ENCODE measurements at regions of chr16 and their contacts with region 1.

Region 1: DNA sequence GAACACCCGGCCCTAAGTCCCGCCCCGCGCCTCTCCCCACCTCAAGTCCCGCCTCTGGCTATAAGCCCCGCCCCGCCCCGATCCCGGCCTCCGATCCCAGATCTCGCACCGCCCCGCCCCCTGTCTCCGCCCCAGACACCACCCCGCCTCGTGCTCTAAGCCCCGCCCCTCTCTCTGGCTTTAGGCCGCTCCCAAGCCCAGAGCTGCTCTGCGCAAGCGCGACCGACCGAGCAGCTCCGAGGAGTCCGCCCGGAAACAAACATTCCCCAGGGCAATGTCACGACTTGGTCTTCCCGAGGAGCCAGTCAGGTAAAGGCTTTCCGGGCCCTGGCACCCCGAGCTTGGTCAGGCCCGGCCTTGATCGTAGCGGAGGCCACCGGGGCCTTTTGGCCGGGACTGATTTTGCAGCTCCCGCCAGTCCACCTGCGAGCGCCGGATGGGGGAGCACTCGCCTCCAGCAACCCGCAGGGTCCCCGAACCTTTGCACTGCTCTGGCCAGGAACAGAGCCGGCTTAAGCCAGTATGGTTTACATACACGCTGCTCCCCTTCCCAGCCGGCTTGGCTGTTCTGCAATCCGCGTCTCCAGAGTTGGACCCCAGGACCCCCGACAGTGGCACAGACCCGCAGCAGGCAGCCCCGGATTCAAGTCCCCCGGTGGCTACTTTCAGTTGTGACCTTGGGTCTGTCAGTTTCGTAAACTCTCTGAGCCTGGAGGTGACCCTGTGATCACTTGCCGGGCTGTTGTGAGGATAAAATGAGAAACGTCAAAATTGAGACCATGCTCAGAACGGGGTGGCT is at the start of gene NUDT7:
- DNase-seq: peak; percentile 87 to 91 (median 89)
- H3K4me3 ChIP-seq: peak within 1 kb of the TSS; percentile 55 to 77
- H3K4me3 Mint-ChIP-seq: peak within 1 kb of the TSS; percentile 86 to 94 (median 90)
- H3K27ac ChIP-seq: peak within 1 kb of the TSS; percentile 54
- H3K27ac Mint-ChIP-seq: peak within 1 kb of the TSS; percentile 51 to 94 (median 87)
- H3K4me1 ChIP-seq: peaks cover 12% of the 10 kb centered on the region
- H3K4me1 Mint-ChIP-seq: peaks cover 9 to 17% (median 12%) of the 10 kb centered on the region in 4 donors
- H3K27me3 ChIP-seq: no peaks in the 10 kb centered on the region
- H3K27me3 Mint-ChIP-seq: peaks cover 0 to 2% of the 10 kb centered on the region in 2 donors
- total RNA-seq, gene NUDT7: 9.8 to 11.0 TPM

Region 2: DNA sequence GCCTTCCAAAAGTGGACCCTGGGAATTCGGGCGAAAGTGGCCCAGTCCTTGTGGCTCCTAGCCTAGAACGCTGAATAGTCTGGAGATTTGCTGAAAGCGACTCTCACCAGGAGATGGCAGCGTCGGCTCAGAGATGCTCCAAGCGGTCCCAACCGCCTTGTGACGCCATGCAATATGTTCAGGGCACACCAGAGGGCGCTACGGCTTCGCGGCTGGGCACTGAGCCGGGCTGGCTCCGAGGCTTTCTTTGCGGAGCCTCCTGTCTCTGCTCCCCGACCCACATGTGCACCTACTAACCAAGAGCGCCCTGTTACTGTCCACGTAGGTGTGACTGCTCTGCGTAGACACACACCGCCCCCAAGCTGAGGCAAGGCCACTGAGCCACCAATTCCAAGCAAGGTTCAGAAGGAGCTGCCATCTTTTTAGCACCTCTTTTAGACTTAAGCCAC is 486.4 kb before region 1 on chr16:
- CTCF ChIA-PET with region 1: no interaction called
- POLR2A ChIA-PET with region 1: no interaction called
- intact Hi-C with region 1: loop called (anchors 1 kb)
- DNase-seq: peak; percentile 80 to 87 (median 83)
- H3K4me3 ChIP-seq: peak overlapping the region in 1 of 2 donors; percentile 39
- H3K4me3 Mint-ChIP-seq: peak overlapping the region; percentile 52 to 85 (median 73)
- H3K27ac ChIP-seq: no peak overlapping the region
- H3K27ac Mint-ChIP-seq: peak overlapping the region in 2 of 7 donors; percentile 28 to 37
- H3K4me1 ChIP-seq: no peaks in the 10 kb centered on the region
- H3K4me1 Mint-ChIP-seq: peaks cover 2 to 6% (median 5%) of the 10 kb centered on the region in 4 donors
- H3K27me3 ChIP-seq: no peaks in the 10 kb centered on the region
- H3K27me3 Mint-ChIP-seq: peaks cover 8 to 23% of the 10 kb centered on the region in 2 donors